ENCODE measurements at regions of chr2 and their contacts with region 1.

Region 1: DNA sequence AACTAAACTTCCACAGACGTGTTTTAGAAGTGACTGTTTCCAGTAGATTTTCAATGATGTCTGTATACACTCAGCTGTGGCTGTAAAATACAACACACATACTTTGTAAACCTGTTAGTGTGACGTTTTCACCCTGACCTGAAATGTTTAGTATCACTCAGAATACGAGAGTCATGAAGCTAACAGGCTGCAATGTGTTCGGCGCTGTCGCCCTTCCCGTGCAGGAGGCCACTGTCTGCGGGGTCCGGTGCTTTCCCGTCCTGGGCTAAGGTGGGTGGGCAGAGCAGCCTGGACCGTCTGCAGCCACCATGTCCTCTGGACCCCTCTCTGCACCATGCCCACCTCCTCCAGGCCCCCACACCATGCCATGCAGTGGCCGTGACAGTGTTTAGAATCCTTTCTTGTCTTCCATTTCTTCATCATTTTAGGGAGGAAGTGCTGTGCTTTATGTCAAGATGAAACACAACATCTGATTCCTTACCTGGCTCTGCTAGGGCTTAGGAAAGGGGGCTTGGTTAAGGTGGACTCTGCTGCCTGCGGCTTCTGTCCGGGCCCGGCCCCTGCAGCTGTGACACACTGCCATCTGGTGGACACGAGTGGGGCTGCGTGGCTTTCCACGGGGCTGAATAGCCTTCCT is 53.8 kb upstream of the RBM44 start:
- DNase-seq: peak; percentile 23 to 96
- H3K4me3 ChIP-seq: no peak overlapping the region
- H3K27ac ChIP-seq: no peak overlapping the region
- H3K4me1 ChIP-seq: peaks cover 0 to 7% (median 3%) of the 10 kb centered on the region in 4 experiments; a peak in 4 of 7 replicates
- H3K27me3 ChIP-seq: no peaks in the 10 kb centered on the region
- CTCF ChIP-seq: peak; percentile 92 to 93 (median 93)
- EP300 ChIP-seq: no peak
- POLR2A ChIP-seq: no peak
- RAD21 ChIP-seq: peak; percentile 97 to 99

Region 2: DNA sequence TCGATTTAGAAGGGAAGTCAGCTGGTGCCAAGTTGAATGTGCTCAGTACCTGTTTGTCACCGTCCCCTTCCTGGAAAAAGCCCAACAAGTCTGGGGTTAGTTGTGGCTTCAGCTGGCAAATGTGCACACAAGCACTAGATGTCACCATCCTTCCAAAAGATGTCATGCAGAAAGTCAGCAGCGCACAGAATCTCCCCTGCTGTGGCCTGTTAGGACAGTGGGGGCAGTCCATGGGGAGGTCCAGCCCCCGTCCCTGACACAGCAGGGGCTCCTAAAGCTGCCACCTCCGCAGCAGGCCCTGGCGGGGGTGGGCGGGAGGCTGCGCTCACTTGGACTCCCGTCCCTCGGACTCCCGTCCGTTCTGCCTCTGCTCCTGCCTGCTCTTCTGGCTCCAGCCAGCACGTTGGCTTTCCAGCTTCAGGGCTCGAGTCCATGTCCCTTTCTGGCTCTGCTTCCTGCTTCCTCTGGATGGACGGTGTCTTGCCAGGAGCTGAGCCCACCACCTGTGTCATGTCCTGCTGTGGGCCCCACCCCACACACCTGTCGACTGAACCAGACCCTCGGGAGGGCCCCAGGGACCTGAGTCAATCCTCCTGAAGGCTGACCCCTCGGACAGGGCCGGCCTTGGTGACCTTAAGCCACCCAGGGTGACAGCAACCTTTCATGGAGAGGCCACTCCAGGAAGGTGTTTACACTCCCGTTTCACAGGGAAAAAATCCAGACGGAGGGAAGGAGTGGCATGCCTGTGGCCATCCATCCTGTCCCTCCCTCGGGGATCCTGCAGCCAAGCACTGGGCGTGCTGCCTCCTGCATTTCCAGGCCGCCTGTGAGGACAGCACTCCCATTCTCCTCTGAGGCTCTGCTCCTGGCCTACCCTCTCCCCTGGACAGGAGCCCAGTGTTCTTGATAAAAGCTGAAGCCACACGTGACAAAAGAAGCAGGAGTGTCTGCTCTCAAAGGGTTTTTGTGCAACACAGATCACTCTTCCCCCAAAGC is 162.7 kb before region 1 on chr2:
- CTCF ChIA-PET with region 1: interaction called, 10 read pairs
- POLR2A ChIA-PET with region 1: interaction called, 3 read pairs
- DNase-seq: no peak
- H3K4me3 ChIP-seq: no peak overlapping the region
- H3K27ac ChIP-seq: no peak overlapping the region
- H3K4me1 ChIP-seq: peaks cover 0 to 19% (median 14%) of the 10 kb centered on the region in 4 experiments; a peak in 6 of 7 replicates
- H3K27me3 ChIP-seq: no peaks in the 10 kb centered on the region
- CTCF ChIP-seq: peak in 2 of 3 experiments; percentile 30 to 51; a peak in 2 of 4 replicates
- EP300 ChIP-seq: no peak
- POLR2A ChIP-seq: no peak
- RAD21 ChIP-seq: peak; percentile 54 to 69

Region 3: GRCh38 chr2:237627441-237628246 is 117.1 kb before region 1 on chr2 and contains the start of gene LRRFIP1:
- CTCF ChIA-PET with region 1: interaction called, 11 read pairs
- POLR2A ChIA-PET with region 1: no interaction called
- DNase-seq: peak in 1 of 2 experiments; percentile 54
- H3K4me3 ChIP-seq: peak within 1 kb of the TSS; percentile 54 to 75 (median 56)
- H3K27ac ChIP-seq: no peak within 1 kb of the TSS
- H3K4me1 ChIP-seq: peaks cover 3 to 13% (median 8%) of the 10 kb centered on the region in 4 experiments; a peak in 5 of 7 replicates
- H3K27me3 ChIP-seq: peaks cover 0 to 31% (median 24%) of the 10 kb centered on the region in 4 experiments; a peak in 6 of 7 replicates
- CTCF ChIP-seq: no peak
- EP300 ChIP-seq: no peak
- POLR2A ChIP-seq: no peak
- RAD21 ChIP-seq: no peak
- total RNA-seq, gene LRRFIP1: 68.6 and 75.8 TPM in 2 replicates

Region 4: GRCh38 chr2:237660380-237660904 is 84.3 kb before region 1 on chr2:
- CTCF ChIA-PET with region 1: interaction called, 10 read pairs
- POLR2A ChIA-PET with region 1: no interaction called
- DNase-seq: no peak
- H3K4me3 ChIP-seq: no peak overlapping the region
- H3K27ac ChIP-seq: no peak overlapping the region
- H3K4me1 ChIP-seq: peaks cover 0 to 7% (median 2%) of the 10 kb centered on the region in 4 experiments; a peak in 4 of 7 replicates
- H3K27me3 ChIP-seq: no peaks in the 10 kb centered on the region
- CTCF ChIP-seq: no peak
- EP300 ChIP-seq: no peak
- POLR2A ChIP-seq: no peak
- RAD21 ChIP-seq: no peak

Region 5: GRCh38 chr2:237674731-237675276 is 69.9 kb before region 1 on chr2:
- CTCF ChIA-PET with region 1: interaction called, 130 read pairs
- POLR2A ChIA-PET with region 1: no interaction called
- DNase-seq: peak in 1 of 2 experiments; percentile 76
- H3K4me3 ChIP-seq: peak overlapping the region in 2 of 4 experiments; percentile 15 to 27; a peak in 2 of 8 replicates
- H3K27ac ChIP-seq: peak overlapping the region; percentile 69
- H3K4me1 ChIP-seq: peaks cover 6 to 19% (median 12%) of the 10 kb centered on the region in 4 experiments
- H3K27me3 ChIP-seq: no peaks in the 10 kb centered on the region
- CTCF ChIP-seq: no peak
- EP300 ChIP-seq: no peak
- POLR2A ChIP-seq: no peak
- RAD21 ChIP-seq: no peak

Region 6: GRCh38 chr2:237685408-237685807 is 59.3 kb before region 1 on chr2:
- CTCF ChIA-PET with region 1: interaction called, 29 read pairs
- POLR2A ChIA-PET with region 1: no interaction called
- DNase-seq: no peak
- H3K4me3 ChIP-seq: no peak overlapping the region
- H3K27ac ChIP-seq: no peak overlapping the region
- H3K4me1 ChIP-seq: no peaks in the 10 kb centered on the region
- H3K27me3 ChIP-seq: no peaks in the 10 kb centered on the region
- CTCF ChIP-seq: peak; percentile 35 to 67 (median 57)
- EP300 ChIP-seq: no peak
- POLR2A ChIP-seq: no peak
- RAD21 ChIP-seq: peak; percentile 44 to 64

Region 7: GRCh38 chr2:237731663-237732062 is 13.1 kb before region 1 on chr2:
- CTCF ChIA-PET with region 1: interaction called, 73 read pairs
- POLR2A ChIA-PET with region 1: interaction called, 6 read pairs
- DNase-seq: no peak
- H3K4me3 ChIP-seq: no peak overlapping the region
- H3K27ac ChIP-seq: no peak overlapping the region
- H3K4me1 ChIP-seq: peaks cover 8 to 27% (median 20%) of the 10 kb centered on the region in 4 experiments
- H3K27me3 ChIP-seq: no peaks in the 10 kb centered on the region
- CTCF ChIP-seq: no peak
- EP300 ChIP-seq: no peak
- POLR2A ChIP-seq: no peak
- RAD21 ChIP-seq: no peak

Measured in H1 (cell line).